HepG2 (cell line): ENCODE measurements at regions of chr2 and their contacts with region 1.

Region 1: DNA sequence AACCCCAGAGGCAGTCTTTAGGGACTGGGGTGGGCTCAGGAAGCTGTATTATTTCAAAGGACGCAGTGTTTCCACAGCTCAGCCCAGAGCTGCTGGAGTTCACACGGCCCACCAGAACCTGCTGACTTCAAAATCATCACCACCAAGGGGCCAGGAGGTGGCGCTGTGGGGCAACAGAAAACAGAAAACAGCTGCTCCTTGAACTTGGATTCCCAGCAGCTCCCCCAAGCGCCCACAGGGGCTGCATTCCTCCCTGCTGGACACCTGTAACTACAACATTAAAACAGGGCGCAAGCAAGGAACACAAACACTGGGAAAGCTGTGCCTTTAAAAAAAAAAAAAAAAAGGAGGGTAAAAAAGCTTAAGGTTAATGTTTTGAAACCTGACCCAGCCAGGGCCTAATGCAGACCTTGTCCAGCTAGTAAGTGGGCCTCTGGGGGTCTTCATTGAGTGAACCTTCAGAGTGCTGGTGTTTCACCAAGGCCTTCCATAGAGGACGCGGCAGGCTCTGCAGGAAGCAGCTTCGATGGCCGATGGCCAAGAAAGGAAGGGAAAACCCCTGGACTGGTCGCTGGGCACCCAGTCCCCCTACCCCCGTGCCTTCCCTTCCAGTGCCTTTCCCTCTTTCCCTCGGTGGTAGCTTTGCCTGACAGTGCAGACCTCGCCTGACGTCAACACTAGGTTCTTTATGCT is 25.9 kb downstream of the MLPH start:
- DNase-seq: peak; percentile 92
- ATAC-seq: peak; percentile 93
- H3K4me3 ChIP-seq: peak overlapping the region in 1 of 3 experiments; percentile 27; a peak in 2 of 6 replicates
- H3K27ac ChIP-seq: no peak overlapping the region
- H3K4me1 ChIP-seq: peaks cover 11% of the 10 kb centered on the region
- H3K27me3 ChIP-seq: peaks cover 12 to 67% of the 10 kb centered on the region in 2 experiments; a peak in 3 of 5 replicates
- CTCF ChIP-seq: peak; percentile 97
- EP300 ChIP-seq: 0 out of 4 replicates have a peak, but pooled peaks of 1 of the 2 experiments have one; percentile 23
- POLR2A ChIP-seq: no peak
- RAD21 ChIP-seq: peak; percentile 98

Region 2: DNA sequence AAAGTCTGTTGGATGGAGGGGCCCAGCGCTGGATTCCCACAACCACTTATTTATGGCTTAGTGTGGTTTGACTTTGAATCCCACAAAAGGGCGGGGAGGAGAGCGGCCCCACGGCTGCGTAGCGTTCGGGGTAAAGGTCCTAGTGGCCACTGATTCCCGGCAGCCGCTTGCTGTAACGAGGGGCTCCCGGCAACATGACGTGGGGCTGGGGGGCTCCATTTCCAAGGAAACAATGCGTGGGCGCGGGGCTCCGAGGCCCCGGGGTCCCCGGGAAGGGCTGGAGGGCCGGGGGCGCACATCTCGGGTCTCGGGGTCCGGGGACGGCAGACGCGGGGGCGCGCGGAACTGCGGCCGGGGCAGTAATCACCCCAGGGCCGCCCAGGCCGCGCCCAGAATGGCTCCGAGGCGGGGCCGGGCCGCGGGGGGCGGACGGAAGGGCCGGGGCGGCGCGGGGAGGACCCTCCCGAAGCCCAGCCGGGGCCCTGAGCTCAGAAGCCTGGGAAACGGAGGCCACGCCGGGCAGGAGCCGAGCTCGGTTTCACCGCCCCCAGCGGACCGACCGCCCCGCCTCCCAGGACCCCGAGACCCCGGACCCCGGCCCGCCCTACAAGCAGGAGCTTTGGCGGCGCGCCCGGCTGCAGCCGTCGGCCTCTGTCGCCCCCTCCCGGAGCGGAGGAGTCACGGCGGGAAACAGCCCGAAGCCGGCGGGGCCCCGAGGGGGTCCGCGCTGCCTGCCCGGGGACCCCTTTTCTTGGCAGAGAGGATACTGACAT is 37.8 kb before region 1 on chr2:
- CTCF ChIA-PET with region 1: interaction called, 18 read pairs
- POLR2A ChIA-PET with region 1: interaction called, 5 read pairs
- in situ Hi-C with region 1: no loop called
- intact Hi-C with region 1: loop called (anchors 2 kb)
- DNase-seq: peak; percentile 56
- ATAC-seq: peak; percentile 89
- H3K4me3 ChIP-seq: peak overlapping the region; percentile 73 to 92 (median 85)
- H3K27ac ChIP-seq: peak overlapping the region; percentile 74
- H3K4me1 ChIP-seq: peaks cover 15% of the 10 kb centered on the region
- H3K27me3 ChIP-seq: peaks cover 0 to 34% of the 10 kb centered on the region in 2 experiments; a peak in 4 of 5 replicates
- CTCF ChIP-seq: peak; percentile 90
- EP300 ChIP-seq: peak in 1 of 2 experiments; percentile 20; a peak in 1 of 4 replicates
- POLR2A ChIP-seq: peak; percentile 63 to 85
- RAD21 ChIP-seq: peak; percentile 67

Region 3: DNA sequence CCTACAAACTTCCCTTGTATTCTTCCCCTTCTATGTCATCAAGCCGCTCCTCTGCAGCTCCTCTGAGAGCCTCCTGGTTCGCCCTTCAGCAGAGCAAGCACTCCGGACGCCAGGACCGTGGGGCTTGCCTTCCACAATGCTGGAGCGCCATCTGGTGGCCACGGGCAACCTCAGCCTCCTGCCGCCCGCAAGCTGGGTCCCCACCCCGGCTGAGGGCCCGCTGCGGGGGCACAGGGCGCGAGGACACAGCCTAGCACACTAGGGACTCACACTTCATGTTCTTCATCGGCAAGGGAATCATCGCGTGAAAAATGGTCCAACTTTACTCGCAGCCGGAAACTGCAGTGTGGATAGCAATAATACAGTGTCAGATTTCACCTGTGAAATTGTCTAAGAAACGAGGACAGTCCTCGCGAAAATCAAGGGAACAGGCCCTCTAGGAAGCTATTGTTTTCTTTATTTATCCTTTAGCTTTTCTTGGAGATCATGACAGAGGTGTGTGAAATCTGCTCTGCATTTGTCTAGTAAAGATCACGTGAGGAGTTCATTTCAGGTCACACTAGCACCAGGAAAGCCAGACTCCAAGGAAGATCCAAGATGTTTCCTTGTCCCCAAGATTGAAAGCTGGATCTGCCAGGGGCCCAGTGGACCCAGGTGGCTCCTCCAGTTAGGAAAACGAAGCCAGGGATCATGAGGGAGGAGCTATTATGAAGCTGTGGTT is 59.3 kb after region 1 on chr2:
- CTCF ChIA-PET with region 1: interaction called, 109 read pairs
- POLR2A ChIA-PET with region 1: interaction called, 11 read pairs
- in situ Hi-C with region 1: loop called (anchors 5 kb)
- intact Hi-C with region 1: loop called (anchors 1 kb)
- DNase-seq: peak; percentile 84
- ATAC-seq: peak; percentile 91
- H3K4me3 ChIP-seq: no peak overlapping the region; a peak in 1 of 6 replicates
- H3K27ac ChIP-seq: no peak overlapping the region
- H3K4me1 ChIP-seq: peaks cover 19% of the 10 kb centered on the region
- H3K27me3 ChIP-seq: peaks cover 0 to 13% of the 10 kb centered on the region in 2 experiments; a peak in 3 of 5 replicates
- CTCF ChIP-seq: peak; percentile 100
- EP300 ChIP-seq: no peak
- POLR2A ChIP-seq: 0 out of 4 replicates have a peak, but pooled peaks of 1 of the 2 experiments have one; percentile 30
- RAD21 ChIP-seq: peak; percentile 100

Region 4: DNA sequence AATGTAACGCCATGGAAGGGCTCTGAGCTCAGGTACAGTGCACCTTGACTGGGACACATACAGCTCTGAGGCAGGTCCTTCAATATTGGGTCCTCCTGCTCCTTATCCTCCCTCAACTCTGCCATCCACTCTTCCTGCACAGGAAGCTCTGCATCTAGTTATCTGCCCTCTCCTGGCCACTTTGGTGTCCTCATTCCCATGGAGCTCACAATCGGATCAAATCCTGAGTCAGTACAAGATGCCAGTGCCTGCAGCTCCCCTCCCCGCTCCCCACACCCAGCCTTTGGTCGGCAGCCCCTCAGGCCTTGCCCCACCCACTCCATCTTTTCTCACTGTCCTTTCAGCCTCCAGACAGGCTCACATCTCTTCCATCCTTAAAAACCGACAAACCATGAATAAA is 172.5 kb after region 1 on chr2:
- CTCF ChIA-PET with region 1: no interaction called
- POLR2A ChIA-PET with region 1: no interaction called
- in situ Hi-C with region 1: no loop called
- intact Hi-C with region 1: loop called (anchors 5 kb)
- DNase-seq: peak; percentile 66
- ATAC-seq: peak; percentile 74
- H3K4me3 ChIP-seq: no peak overlapping the region
- H3K27ac ChIP-seq: no peak overlapping the region
- H3K4me1 ChIP-seq: peaks cover 83% of the 10 kb centered on the region
- H3K27me3 ChIP-seq: no peaks in the 10 kb centered on the region
- CTCF ChIP-seq: peak; percentile 80
- EP300 ChIP-seq: no peak
- POLR2A ChIP-seq: no peak
- RAD21 ChIP-seq: peak; percentile 49; the same call in 1 of the 2 replicates

Region 5: GRCh38 chr2:237774802-237775553 is 262.1 kb after region 1 on chr2:
- CTCF ChIA-PET with region 1: interaction called, 3 read pairs
- POLR2A ChIA-PET with region 1: interaction called, 4 read pairs
- in situ Hi-C with region 1: no loop called
- intact Hi-C with region 1: loop called (anchors 1 kb)
- DNase-seq: peak; percentile 79
- ATAC-seq: peak; percentile 97
- H3K4me3 ChIP-seq: no peak overlapping the region
- H3K27ac ChIP-seq: no peak overlapping the region
- H3K4me1 ChIP-seq: peaks cover 8% of the 10 kb centered on the region
- H3K27me3 ChIP-seq: no peaks in the 10 kb centered on the region
- CTCF ChIP-seq: peak; percentile 89
- EP300 ChIP-seq: no peak
- POLR2A ChIP-seq: no peak
- RAD21 ChIP-seq: peak; percentile 78

Region 6: GRCh38 chr2:238242731-238243495 is 730.0 kb after region 1 on chr2:
- CTCF ChIA-PET with region 1: no interaction called
- POLR2A ChIA-PET with region 1: no interaction called
- in situ Hi-C with region 1: no loop called
- intact Hi-C with region 1: no loop called
- DNase-seq: peak; percentile 70
- ATAC-seq: peak; percentile 64
- H3K4me3 ChIP-seq: peak overlapping the region; percentile 18 to 64 (median 30)
- H3K27ac ChIP-seq: peak overlapping the region; percentile 79
- H3K4me1 ChIP-seq: peaks cover 51% of the 10 kb centered on the region
- H3K27me3 ChIP-seq: no peaks in the 10 kb centered on the region
- CTCF ChIP-seq: 0 out of 2 replicates have a peak, but pooled peaks have one; percentile 12
- EP300 ChIP-seq: 0 out of 4 replicates have a peak, but pooled peaks of 1 of the 2 experiments have one; percentile 11
- POLR2A ChIP-seq: peak in 1 of 2 experiments; percentile 70; a peak in 2 of 4 replicates
- RAD21 ChIP-seq: no peak